Caco-2 (cell line): ENCODE measurements at regions of chr11 and their contacts with region 1.

Region 1: GRCh38 chr11:68257475-68258362 is 14.1 kb downstream of the C11orf24 start:
- DNase-seq: peak; percentile 97 to 98
- H3K4me3 ChIP-seq: no peak overlapping the region
- H3K4me3 Mint-ChIP-seq: no peak overlapping the region
- H3K27ac Mint-ChIP-seq: peak overlapping the region; percentile 40
- H3K4me1 ChIP-seq: peaks cover 23% of the 10 kb centered on the region
- H3K4me1 Mint-ChIP-seq: peaks cover 22% of the 10 kb centered on the region
- H3K27me3 ChIP-seq: no peaks in the 10 kb centered on the region
- H3K27me3 Mint-ChIP-seq: no peaks in the 10 kb centered on the region
- CTCF ChIP-seq: peak; percentile 95 to 96

Region 2: GRCh38 chr11:68076371-68077042 is 181.2 kb before region 1 on chr11:
- CTCF ChIA-PET with region 1: no interaction called
- POLR2A ChIA-PET with region 1: no interaction called
- intact Hi-C with region 1: no loop called
- DNase-seq: peak in 1 of 2 experiments; percentile 51
- H3K4me3 ChIP-seq: no peak overlapping the region
- H3K4me3 Mint-ChIP-seq: no peak overlapping the region
- H3K27ac Mint-ChIP-seq: no peak overlapping the region
- H3K4me1 ChIP-seq: no peaks in the 10 kb centered on the region
- H3K4me1 Mint-ChIP-seq: no peaks in the 10 kb centered on the region
- H3K27me3 ChIP-seq: no peaks in the 10 kb centered on the region
- H3K27me3 Mint-ChIP-seq: no peaks in the 10 kb centered on the region
- CTCF ChIP-seq: peak; percentile 42 to 75

Region 3: GRCh38 chr11:68200639-68201038 is 57.1 kb before region 1 on chr11:
- CTCF ChIA-PET with region 1: no interaction called
- POLR2A ChIA-PET with region 1: no interaction called
- intact Hi-C with region 1: no loop called
- DNase-seq: no peak
- H3K4me3 ChIP-seq: no peak overlapping the region
- H3K4me3 Mint-ChIP-seq: no peak overlapping the region
- H3K27ac Mint-ChIP-seq: peak overlapping the region; percentile 27
- H3K4me1 ChIP-seq: no peaks in the 10 kb centered on the region
- H3K4me1 Mint-ChIP-seq: peaks cover 10% of the 10 kb centered on the region
- H3K27me3 ChIP-seq: no peaks in the 10 kb centered on the region
- H3K27me3 Mint-ChIP-seq: no peaks in the 10 kb centered on the region
- CTCF ChIP-seq: no peak

Region 4: GRCh38 chr11:68447015-68447801 is 189.5 kb after region 1 on chr11:
- CTCF ChIA-PET with region 1: no interaction called
- POLR2A ChIA-PET with region 1: no interaction called
- intact Hi-C with region 1: loop called (anchors 1 kb)
- DNase-seq: peak; percentile 87 to 92
- H3K4me3 ChIP-seq: no peak overlapping the region
- H3K4me3 Mint-ChIP-seq: no peak overlapping the region
- H3K27ac Mint-ChIP-seq: peak overlapping the region; percentile 65
- H3K4me1 ChIP-seq: no peaks in the 10 kb centered on the region
- H3K4me1 Mint-ChIP-seq: no peaks in the 10 kb centered on the region
- H3K27me3 ChIP-seq: no peaks in the 10 kb centered on the region
- H3K27me3 Mint-ChIP-seq: no peaks in the 10 kb centered on the region
- CTCF ChIP-seq: peak; percentile 98 to 99